Activated CD4-positive, alpha-beta T cell treated with anti-CD3 and anti-CD28 coated beads, Interleukin-2, amount 10 ng/mL, durations not matched to agents 24 days and 14 days (primary cell): ENCODE measurements at regions of chr13 and their contacts with region 1.

Region 1: DNA sequence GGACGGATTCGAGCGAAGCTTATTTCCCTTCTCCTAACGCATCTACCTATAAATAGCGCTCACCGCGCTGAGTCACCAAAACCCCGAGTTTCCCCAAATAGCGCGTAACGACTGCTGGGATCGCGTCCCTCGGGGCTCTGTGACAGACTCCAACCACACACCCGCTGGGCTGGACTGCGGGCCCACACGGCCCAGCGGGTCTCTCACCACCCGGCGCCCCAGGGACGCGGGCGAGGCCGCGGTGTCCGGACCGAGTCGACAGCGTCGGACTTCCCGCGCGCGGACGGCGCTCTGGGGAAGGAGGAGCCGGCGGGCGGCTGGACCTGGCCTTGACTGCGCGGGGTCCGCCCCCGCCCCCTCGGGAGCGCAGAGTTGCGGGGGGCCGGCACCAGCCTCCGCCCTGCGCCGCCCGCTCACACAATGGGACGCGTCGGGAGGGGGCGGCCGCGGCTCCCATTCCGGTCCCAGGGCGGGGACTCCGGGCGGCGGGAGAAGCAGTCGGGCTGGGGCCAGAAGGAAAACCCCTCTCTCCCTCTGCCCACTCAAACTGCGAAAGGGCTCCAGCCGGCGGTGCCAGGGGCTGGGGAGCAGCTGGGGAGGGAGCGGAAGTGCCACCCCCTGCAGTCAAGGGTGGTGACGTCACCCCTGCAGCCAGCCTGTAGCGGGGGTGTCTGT is 108.8 kb downstream of the KCNRG start:
- DNase-seq: peak; percentile 89
- H3K4me3 Mint-ChIP-seq: peak overlapping the region; percentile 84
- H3K27ac Mint-ChIP-seq: peak overlapping the region; percentile 93
- H3K4me1 Mint-ChIP-seq: peaks cover 41% of the 10 kb centered on the region
- H3K27me3 Mint-ChIP-seq: peaks cover 3% of the 10 kb centered on the region

Region 2: GRCh38 chr13:48505597-48506091 is 1618.4 kb before region 1 on chr13:
- intact Hi-C with region 1: loop called (anchors 10 kb)
- DNase-seq: peak; percentile 89
- H3K4me3 Mint-ChIP-seq: peak overlapping the region; percentile 64
- H3K27ac Mint-ChIP-seq: peak overlapping the region; percentile 84
- H3K4me1 Mint-ChIP-seq: peaks cover 66% of the 10 kb centered on the region
- H3K27me3 Mint-ChIP-seq: peaks cover 7% of the 10 kb centered on the region

Region 3: GRCh38 chr13:49855930-49856329 is 268.1 kb before region 1 on chr13:
- intact Hi-C with region 1: no loop called
- DNase-seq: no peak
- H3K4me3 Mint-ChIP-seq: no peak overlapping the region
- H3K27ac Mint-ChIP-seq: no peak overlapping the region
- H3K4me1 Mint-ChIP-seq: no peaks in the 10 kb centered on the region
- H3K27me3 Mint-ChIP-seq: peaks cover 5% of the 10 kb centered on the region

Region 4: GRCh38 chr13:49936085-49936940 is 187.7 kb before region 1 on chr13 and contains the start of gene SPRYD7:
- intact Hi-C with region 1: loop called (anchors 2 kb)
- DNase-seq: peak; percentile 99
- H3K4me3 Mint-ChIP-seq: peak within 1 kb of the TSS; percentile 94
- H3K27ac Mint-ChIP-seq: peak within 1 kb of the TSS; percentile 83
- H3K4me1 Mint-ChIP-seq: peaks cover 13% of the 10 kb centered on the region
- H3K27me3 Mint-ChIP-seq: peaks cover 17% of the 10 kb centered on the region
- total RNA-seq, gene SPRYD7: 6.9 and 8.1 TPM in 2 replicates

Region 5: GRCh38 chr13:50106559-50106958 is 17.4 kb before region 1 on chr13:
- intact Hi-C with region 1: loop called (anchors 1 kb)
- DNase-seq: no peak
- H3K4me3 Mint-ChIP-seq: peak overlapping the region; percentile 13
- H3K27ac Mint-ChIP-seq: peak overlapping the region; percentile 15
- H3K4me1 Mint-ChIP-seq: peaks cover 29% of the 10 kb centered on the region
- H3K27me3 Mint-ChIP-seq: no peaks in the 10 kb centered on the region

Region 6: DNA sequence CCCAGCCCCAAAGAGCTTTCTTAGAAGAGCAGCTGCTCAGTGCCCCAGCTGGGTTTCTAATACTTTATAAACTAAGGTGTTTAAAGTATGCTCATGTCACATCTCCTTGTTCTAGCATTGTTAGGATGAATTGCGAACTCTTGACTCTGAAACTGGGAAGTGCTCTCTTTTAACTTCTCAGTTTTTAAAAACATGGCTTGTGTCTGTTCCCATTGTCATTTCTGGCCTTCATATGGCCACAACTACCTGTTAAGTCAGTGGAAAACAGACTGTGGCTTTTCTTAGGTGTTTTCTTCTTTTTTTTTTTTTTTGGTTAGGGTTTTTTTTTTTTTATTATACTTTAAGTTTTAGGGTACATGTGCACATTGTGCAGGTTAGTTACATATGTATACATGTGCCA is 56.0 kb after region 1 on chr13:
- intact Hi-C with region 1: no loop called
- DNase-seq: no peak
- H3K4me3 Mint-ChIP-seq: no peak overlapping the region
- H3K27ac Mint-ChIP-seq: no peak overlapping the region
- H3K4me1 Mint-ChIP-seq: no peaks in the 10 kb centered on the region
- H3K27me3 Mint-ChIP-seq: peaks cover 24% of the 10 kb centered on the region

Region 7: GRCh38 chr13:50529154-50529882 is 405.3 kb after region 1 on chr13:
- intact Hi-C with region 1: loop called (anchors 5 kb)
- DNase-seq: peak; percentile 70
- H3K4me3 Mint-ChIP-seq: peak overlapping the region; percentile 8
- H3K27ac Mint-ChIP-seq: peak overlapping the region; percentile 66
- H3K4me1 Mint-ChIP-seq: peaks cover 34% of the 10 kb centered on the region
- H3K27me3 Mint-ChIP-seq: peaks cover 21% of the 10 kb centered on the region